ENCODE measurements at regions of chr10 and their contacts with region 1.

Region 1: DNA sequence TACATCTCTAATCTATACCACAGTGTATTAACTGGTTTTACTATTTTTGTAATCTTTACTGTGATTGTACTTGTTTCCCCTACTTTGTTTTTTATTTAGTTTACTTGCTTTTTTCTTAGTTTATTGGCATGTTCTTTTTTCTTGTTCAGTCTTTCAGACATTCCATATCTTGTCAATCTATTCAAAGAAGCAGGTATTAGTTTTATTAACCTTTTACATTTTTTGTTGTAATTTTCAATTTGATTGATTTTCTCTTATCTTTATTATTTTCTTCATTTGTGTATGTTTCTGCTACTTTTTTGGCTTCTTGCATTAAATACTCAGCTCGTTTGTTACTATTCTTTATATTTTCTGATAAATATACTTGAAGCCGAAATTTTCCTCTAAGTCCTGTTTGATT is 41.6 kb downstream of the TLX1 start:
- DNase-seq: no peak
- H3K4me3 ChIP-seq: no peak overlapping the region
- H3K27me3 ChIP-seq: peaks cover 3% of the 10 kb centered on the region
- CTCF ChIP-seq: no peak

Region 2: GRCh38 chr10:100807241-100807951 is 365.3 kb before region 1 on chr10:
- CTCF ChIA-PET with region 1: no interaction called
- POLR2A ChIA-PET with region 1: no interaction called
- DNase-seq: no peak
- H3K4me3 ChIP-seq: no peak overlapping the region
- H3K27me3 ChIP-seq: peaks cover 37% of the 10 kb centered on the region
- CTCF ChIP-seq: no peak

Region 3: DNA sequence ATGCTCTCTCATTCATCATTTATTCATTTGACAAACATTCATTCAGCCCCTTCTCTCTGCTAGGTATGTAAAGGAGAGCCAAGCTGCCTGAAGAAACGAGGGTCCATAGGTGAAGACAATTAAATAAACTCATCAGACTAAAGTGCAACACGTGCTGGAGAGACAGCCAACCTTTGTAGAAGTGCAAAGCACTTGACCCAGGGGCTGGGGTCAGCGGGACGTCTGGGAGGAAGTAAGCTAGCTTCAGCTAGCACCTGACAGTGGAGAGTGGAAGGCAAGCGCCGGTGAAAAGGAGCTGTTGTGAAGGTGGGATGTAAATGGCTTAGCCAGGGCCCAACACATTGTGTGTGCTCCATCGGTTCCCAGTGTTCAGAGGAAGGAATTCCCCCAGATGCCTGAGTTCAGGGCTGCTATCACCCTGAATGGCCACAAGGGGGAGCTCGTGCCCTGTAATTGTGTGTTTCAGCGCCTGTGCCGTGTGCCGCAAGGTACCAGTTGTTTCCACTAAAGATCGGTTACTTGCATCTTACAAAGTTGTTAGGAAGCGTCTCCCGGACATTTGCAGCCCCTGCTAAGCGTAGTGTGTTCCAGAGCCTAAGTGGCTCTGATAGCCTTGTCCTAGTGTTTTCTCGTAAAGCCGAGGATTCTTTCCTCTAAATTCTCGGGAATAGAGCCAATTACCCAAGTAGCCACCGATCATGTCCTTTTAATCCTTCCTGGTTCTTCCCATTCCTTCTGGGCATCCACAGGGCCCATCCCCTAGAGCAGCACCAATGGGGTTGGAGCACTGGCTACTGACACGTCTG is 11.0 kb before region 1 on chr10:
- CTCF ChIA-PET with region 1: interaction called, 26 read pairs
- POLR2A ChIA-PET with region 1: no interaction called
- DNase-seq: peak; percentile 14
- H3K4me3 ChIP-seq: peak overlapping the region; percentile 38
- H3K27me3 ChIP-seq: peaks cover 12% of the 10 kb centered on the region; the same call in 1 of the 2 replicates
- CTCF ChIP-seq: peak; percentile 95

Region 4: GRCh38 chr10:101297901-101298486 is 125.3 kb after region 1 on chr10:
- CTCF ChIA-PET with region 1: no interaction called
- POLR2A ChIA-PET with region 1: no interaction called
- DNase-seq: no peak
- H3K4me3 ChIP-seq: no peak overlapping the region
- H3K27me3 ChIP-seq: peaks cover 28% of the 10 kb centered on the region
- CTCF ChIP-seq: peak; percentile 93